ENCODE measurements at regions of chr1 and their contacts with region 1.

Region 1: GRCh38 chr1:15788624-15789301 is 18.7 kb downstream of the UQCRHL start:
- DNase-seq: peak in 1 of 9 experiments; percentile 18
- ATAC-seq: no peak
- H3K4me3 ChIP-seq: no peak overlapping the region
- H3K4me3 Mint-ChIP-seq: no peak overlapping the region
- H3K27ac ChIP-seq: no peak overlapping the region
- H3K27ac Mint-ChIP-seq: no peak overlapping the region
- H3K4me1 ChIP-seq: no peaks in the 10 kb centered on the region
- H3K4me1 Mint-ChIP-seq: peaks cover 3% of the 10 kb centered on the region
- H3K27me3 ChIP-seq: no peaks in the 10 kb centered on the region
- H3K27me3 Mint-ChIP-seq: peaks cover 11% of the 10 kb centered on the region
- CTCF ChIP-seq: no peak

Region 2: GRCh38 chr1:15775706-15776105 is 13.1 kb before region 1 on chr1:
- CTCF ChIA-PET with region 1: interaction called, 22 read pairs
- POLR2A ChIA-PET with region 1: no interaction called
- intact Hi-C with region 1: no loop called
- DNase-seq: no peak
- ATAC-seq: no peak
- H3K4me3 ChIP-seq: no peak overlapping the region
- H3K4me3 Mint-ChIP-seq: no peak overlapping the region
- H3K27ac ChIP-seq: no peak overlapping the region
- H3K27ac Mint-ChIP-seq: no peak overlapping the region
- H3K4me1 ChIP-seq: no peaks in the 10 kb centered on the region
- H3K4me1 Mint-ChIP-seq: no peaks in the 10 kb centered on the region
- H3K27me3 ChIP-seq: no peaks in the 10 kb centered on the region
- H3K27me3 Mint-ChIP-seq: peaks cover 10% of the 10 kb centered on the region
- CTCF ChIP-seq: no peak

Region 3: DNA sequence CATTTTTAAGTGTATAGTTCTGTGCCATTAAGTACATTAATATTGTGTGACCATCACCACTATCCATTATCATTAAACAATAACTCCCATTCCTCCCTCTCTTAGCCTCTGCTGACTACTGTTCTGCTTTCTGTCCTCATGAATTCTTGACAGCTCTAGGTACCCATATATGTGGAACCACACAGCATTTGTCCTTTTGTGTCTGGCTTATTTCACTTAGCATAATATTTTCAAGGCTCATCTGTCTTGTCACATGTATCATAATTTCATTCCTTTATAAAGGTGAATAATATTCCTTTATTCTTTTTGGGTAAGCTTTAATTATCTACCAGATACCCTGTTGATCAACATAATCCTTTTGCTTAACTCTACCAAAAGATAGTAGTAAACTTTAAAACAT is 106.5 kb after region 1 on chr1:
- CTCF ChIA-PET with region 1: no interaction called
- POLR2A ChIA-PET with region 1: no interaction called
- intact Hi-C with region 1: no loop called
- DNase-seq: no peak
- ATAC-seq: no peak
- H3K4me3 ChIP-seq: no peak overlapping the region
- H3K4me3 Mint-ChIP-seq: no peak overlapping the region
- H3K27ac ChIP-seq: no peak overlapping the region
- H3K27ac Mint-ChIP-seq: peak overlapping the region; percentile 2
- H3K4me1 ChIP-seq: no peaks in the 10 kb centered on the region
- H3K4me1 Mint-ChIP-seq: peaks cover 45% of the 10 kb centered on the region
- H3K27me3 ChIP-seq: no peaks in the 10 kb centered on the region
- H3K27me3 Mint-ChIP-seq: no peaks in the 10 kb centered on the region
- CTCF ChIP-seq: no peak

Region 4: DNA sequence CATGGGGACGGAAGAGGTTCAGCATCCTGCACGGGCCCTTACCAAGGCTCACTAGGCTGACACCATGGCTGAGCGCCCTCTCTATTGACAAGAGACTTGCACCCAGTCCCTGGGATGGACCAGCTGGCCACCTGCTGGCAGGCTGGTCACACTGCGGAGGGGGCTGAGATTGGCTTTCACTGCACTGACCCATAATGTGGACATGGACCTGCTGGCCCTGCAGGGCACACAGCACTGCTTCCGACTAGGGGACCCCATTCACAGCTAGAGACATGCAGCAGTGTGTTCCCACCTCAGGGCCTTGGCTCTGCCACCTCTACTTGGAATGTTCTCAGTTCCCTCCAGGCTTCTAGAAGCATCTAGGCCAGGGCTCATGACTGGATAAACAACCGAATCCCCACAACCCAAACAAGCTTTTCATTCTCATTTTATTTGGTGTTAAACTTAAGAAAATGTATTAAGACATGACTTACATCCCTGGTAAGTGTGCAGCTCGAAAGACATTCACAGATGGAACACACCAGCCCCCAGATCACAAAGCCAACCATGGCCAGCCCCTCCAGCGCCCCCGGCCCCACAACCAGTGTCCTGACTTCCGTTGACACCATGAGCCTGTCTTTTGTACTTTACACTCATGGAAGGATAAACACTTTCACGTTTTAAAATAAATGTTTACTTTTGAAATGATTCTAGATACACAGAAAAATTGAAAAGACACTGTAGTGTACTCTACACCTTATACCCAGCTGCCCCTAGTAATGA is 206.0 kb after region 1 on chr1:
- CTCF ChIA-PET with region 1: interaction called, 8 read pairs
- POLR2A ChIA-PET with region 1: no interaction called
- intact Hi-C with region 1: loop called (anchors 1 kb)
- DNase-seq: peak in 6 of 9 experiments; percentile 19 to 63 (median 52)
- ATAC-seq: peak; percentile 77
- H3K4me3 ChIP-seq: no peak overlapping the region
- H3K4me3 Mint-ChIP-seq: no peak overlapping the region
- H3K27ac ChIP-seq: no peak overlapping the region
- H3K27ac Mint-ChIP-seq: no peak overlapping the region
- H3K4me1 ChIP-seq: no peaks in the 10 kb centered on the region
- H3K4me1 Mint-ChIP-seq: no peaks in the 10 kb centered on the region
- H3K27me3 ChIP-seq: no peaks in the 10 kb centered on the region
- H3K27me3 Mint-ChIP-seq: no peaks in the 10 kb centered on the region
- CTCF ChIP-seq: peak; percentile 37